ENCODE measurements at regions of chr12 and their contacts with region 1.

Region 1: GRCh38 chr12:62581288-62582064 is 114.8 kb downstream of the MON2 start:
- DNase-seq: peak; percentile 28
- ATAC-seq: peak; percentile 85
- H3K4me3 ChIP-seq: no peak overlapping the region
- H3K27ac ChIP-seq: no peak overlapping the region
- H3K4me1 ChIP-seq: no peaks in the 10 kb centered on the region
- H3K27me3 ChIP-seq: no peaks in the 10 kb centered on the region
- CTCF ChIP-seq: peak; percentile 68
- EP300 ChIP-seq: no peak
- POLR2A ChIP-seq: no peak
- RAD21 ChIP-seq: peak; percentile 51; the same call in 1 of the 2 replicates

Region 2: GRCh38 chr12:60926256-60926655 is 1655.2 kb before region 1 on chr12:
- CTCF ChIA-PET with region 1: no interaction called
- POLR2A ChIA-PET with region 1: no interaction called
- in situ Hi-C with region 1: no loop called
- intact Hi-C with region 1: no loop called
- DNase-seq: no peak
- ATAC-seq: no peak
- H3K4me3 ChIP-seq: no peak overlapping the region
- H3K27ac ChIP-seq: no peak overlapping the region
- H3K4me1 ChIP-seq: no peaks in the 10 kb centered on the region
- H3K27me3 ChIP-seq: no peaks in the 10 kb centered on the region
- CTCF ChIP-seq: no peak
- EP300 ChIP-seq: no peak
- POLR2A ChIP-seq: no peak
- RAD21 ChIP-seq: no peak

Region 3: GRCh38 chr12:62562846-62563245 is 18.6 kb before region 1 on chr12:
- CTCF ChIA-PET with region 1: no interaction called
- POLR2A ChIA-PET with region 1: no interaction called
- in situ Hi-C with region 1: no loop called
- intact Hi-C with region 1: no loop called
- DNase-seq: no peak
- ATAC-seq: no peak
- H3K4me3 ChIP-seq: no peak overlapping the region
- H3K27ac ChIP-seq: no peak overlapping the region
- H3K4me1 ChIP-seq: no peaks in the 10 kb centered on the region
- H3K27me3 ChIP-seq: no peaks in the 10 kb centered on the region; a peak in 1 of 5 replicates
- CTCF ChIP-seq: no peak
- EP300 ChIP-seq: no peak
- POLR2A ChIP-seq: no peak
- RAD21 ChIP-seq: no peak

Region 4: GRCh38 chr12:62621101-62621638 is 39.7 kb after region 1 on chr12:
- CTCF ChIA-PET with region 1: no interaction called
- POLR2A ChIA-PET with region 1: no interaction called
- in situ Hi-C with region 1: no loop called
- intact Hi-C with region 1: no loop called
- DNase-seq: no peak
- ATAC-seq: no peak
- H3K4me3 ChIP-seq: no peak overlapping the region
- H3K27ac ChIP-seq: no peak overlapping the region
- H3K4me1 ChIP-seq: peaks cover 21% of the 10 kb centered on the region
- H3K27me3 ChIP-seq: no peaks in the 10 kb centered on the region
- CTCF ChIP-seq: no peak
- EP300 ChIP-seq: no peak
- POLR2A ChIP-seq: no peak
- RAD21 ChIP-seq: no peak

Region 5: DNA sequence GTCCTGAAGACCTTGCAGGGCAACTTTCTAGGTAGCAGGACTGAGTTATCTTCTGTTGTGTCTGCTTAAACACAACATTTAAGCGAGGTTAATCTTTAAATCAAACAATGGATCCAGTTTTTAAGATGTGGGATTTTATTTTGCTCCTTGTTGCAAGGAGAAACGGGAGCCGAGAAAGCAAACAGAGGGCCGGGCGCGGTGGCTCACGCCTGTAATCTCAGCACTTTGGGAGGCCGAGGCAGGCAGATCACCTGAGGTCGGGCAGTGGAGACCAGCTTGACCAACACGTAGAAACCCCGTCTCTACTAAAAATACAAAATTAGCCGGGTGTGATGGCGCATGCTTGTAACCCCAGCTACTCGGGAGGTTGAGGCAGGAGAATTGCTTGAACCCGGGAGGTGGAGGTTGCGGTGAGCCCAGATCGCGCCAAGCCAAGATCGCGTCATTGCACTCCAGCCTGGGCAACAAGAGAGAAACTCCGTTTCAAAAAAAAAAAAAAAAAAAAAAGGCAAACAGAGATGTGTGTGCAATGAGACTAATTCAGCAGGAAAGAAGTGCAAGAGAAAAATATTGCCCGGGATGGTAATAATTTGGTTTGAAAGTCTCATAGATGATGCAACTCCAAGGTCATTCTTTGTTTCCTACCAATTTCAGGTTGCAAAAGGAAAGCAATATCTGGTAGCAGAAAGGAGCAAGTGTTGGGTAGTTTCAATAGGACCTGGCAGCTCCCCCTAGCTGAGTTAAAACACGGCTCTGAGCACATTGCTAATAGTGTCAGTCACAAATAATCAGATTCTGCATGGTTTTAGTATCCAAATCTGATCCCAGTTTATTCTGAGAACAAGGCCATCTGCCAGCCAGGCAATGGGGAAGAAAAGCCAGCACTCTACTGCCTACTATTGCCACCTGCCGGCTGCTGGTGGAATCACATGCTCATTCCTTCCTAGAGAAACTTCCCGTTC is 212.1 kb after region 1 on chr12:
- CTCF ChIA-PET with region 1: interaction called, 23 read pairs
- POLR2A ChIA-PET with region 1: no interaction called
- in situ Hi-C with region 1: loop called (anchors 5 kb)
- intact Hi-C with region 1: loop called (anchors 1 kb)
- DNase-seq: peak; percentile 51
- ATAC-seq: peak; percentile 59
- H3K4me3 ChIP-seq: no peak overlapping the region
- H3K27ac ChIP-seq: no peak overlapping the region
- H3K4me1 ChIP-seq: peaks cover 13% of the 10 kb centered on the region
- H3K27me3 ChIP-seq: no peaks in the 10 kb centered on the region
- CTCF ChIP-seq: peak; percentile 85
- EP300 ChIP-seq: no peak
- POLR2A ChIP-seq: no peak
- RAD21 ChIP-seq: peak; percentile 58

Region 6: GRCh38 chr12:62799126-62799736 is 217.8 kb after region 1 on chr12:
- CTCF ChIA-PET with region 1: interaction called, 23 read pairs
- POLR2A ChIA-PET with region 1: no interaction called
- in situ Hi-C with region 1: loop called (anchors 5 kb)
- intact Hi-C with region 1: loop called (anchors 1 kb)
- DNase-seq: peak; percentile 56
- ATAC-seq: peak; percentile 90
- H3K4me3 ChIP-seq: no peak overlapping the region
- H3K27ac ChIP-seq: no peak overlapping the region
- H3K4me1 ChIP-seq: no peaks in the 10 kb centered on the region
- H3K27me3 ChIP-seq: no peaks in the 10 kb centered on the region
- CTCF ChIP-seq: peak; percentile 80
- EP300 ChIP-seq: no peak
- POLR2A ChIP-seq: no peak
- RAD21 ChIP-seq: peak; percentile 69

Region 7: DNA sequence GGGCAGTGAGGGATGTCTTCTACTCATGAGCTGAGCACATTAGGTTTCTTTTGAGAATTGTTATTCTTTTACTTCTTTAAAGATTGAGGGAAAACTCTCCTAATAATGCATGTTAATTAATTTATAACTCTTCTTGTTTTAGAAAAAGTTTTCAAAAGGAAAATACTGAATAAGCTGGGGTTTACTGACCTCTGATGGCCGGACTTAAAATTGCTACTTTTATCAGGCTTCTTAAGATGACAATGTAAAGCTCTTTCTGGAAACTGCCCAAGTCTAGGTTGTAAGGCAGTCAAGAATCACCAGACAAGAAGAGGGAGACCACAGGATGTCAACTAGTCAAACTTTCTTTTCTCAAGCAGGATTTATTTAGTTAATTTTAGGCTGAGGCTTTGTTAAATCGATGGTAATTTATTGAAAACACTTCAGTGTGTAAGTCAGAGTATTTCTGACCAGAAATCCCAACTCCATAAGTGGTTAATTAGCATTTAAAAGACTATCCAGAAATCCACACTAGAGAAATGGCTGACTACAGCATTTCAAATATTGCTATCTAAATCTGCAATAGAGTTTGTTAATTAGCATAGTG is 487.5 kb after region 1 on chr12:
- CTCF ChIA-PET with region 1: interaction called, 3 read pairs
- POLR2A ChIA-PET with region 1: no interaction called
- in situ Hi-C with region 1: loop called (anchors 25 kb)
- intact Hi-C with region 1: loop called (anchors 1 kb)
- DNase-seq: peak; percentile 33
- ATAC-seq: no peak
- H3K4me3 ChIP-seq: no peak overlapping the region
- H3K27ac ChIP-seq: no peak overlapping the region
- H3K4me1 ChIP-seq: peaks cover 7% of the 10 kb centered on the region
- H3K27me3 ChIP-seq: no peaks in the 10 kb centered on the region
- CTCF ChIP-seq: peak; percentile 58
- EP300 ChIP-seq: no peak
- POLR2A ChIP-seq: no peak
- RAD21 ChIP-seq: no peak